K562 (cell line): ENCODE measurements at regions of chr4 and their contacts with region 1.

Region 1: DNA sequence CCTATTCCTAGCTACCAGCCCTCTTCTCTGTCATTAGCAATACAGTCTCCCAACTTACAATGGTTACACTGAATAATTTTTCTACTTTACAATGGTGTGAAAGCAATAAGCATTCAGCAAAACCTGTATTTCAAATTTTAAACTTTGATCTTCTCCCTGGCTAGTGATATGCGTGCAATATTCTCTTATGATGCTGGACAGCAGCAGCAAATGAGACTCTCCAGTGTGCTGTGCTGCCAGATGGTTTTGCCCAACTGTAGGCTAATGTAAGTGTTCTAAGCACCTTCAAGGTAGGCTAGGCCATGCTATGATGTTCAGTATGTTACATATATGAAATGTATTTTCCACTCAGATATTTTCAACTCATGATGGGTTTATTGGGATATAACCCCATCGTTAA is 5.9 kb upstream of the GAR1 start:
- DNase-seq: no peak
- ATAC-seq: 0 out of 3 replicates have a peak, but pooled peaks have one; percentile 11
- H3K4me3 ChIP-seq: no peak overlapping the region
- H3K27ac ChIP-seq: no peak overlapping the region
- H3K4me1 ChIP-seq: peaks cover 8 to 15% of the 10 kb centered on the region in 2 experiments
- H3K27me3 ChIP-seq: no peaks in the 10 kb centered on the region
- CTCF ChIP-seq: no peak
- EP300 ChIP-seq: no peak
- POLR2A ChIP-seq: no peak
- RAD21 ChIP-seq: no peak

Region 2: GRCh38 chr4:109713500-109713899 is 96.2 kb before region 1 on chr4:
- CTCF ChIA-PET with region 1: no interaction called
- POLR2A ChIA-PET with region 1: no interaction called
- in situ Hi-C with region 1: loop called (anchors 5 kb)
- intact Hi-C with region 1: no loop called
- DNase-seq: no peak
- ATAC-seq: no peak
- H3K4me3 ChIP-seq: no peak overlapping the region
- H3K27ac ChIP-seq: no peak overlapping the region
- H3K4me1 ChIP-seq: peaks cover 0 to 4% of the 10 kb centered on the region in 2 experiments; a peak in 2 of 5 replicates
- H3K27me3 ChIP-seq: no peaks in the 10 kb centered on the region
- CTCF ChIP-seq: no peak
- EP300 ChIP-seq: no peak
- POLR2A ChIP-seq: no peak
- RAD21 ChIP-seq: no peak